IMR-90 (cell line): ENCODE measurements at regions of chr5 and their contacts with region 1.

Region 1: DNA sequence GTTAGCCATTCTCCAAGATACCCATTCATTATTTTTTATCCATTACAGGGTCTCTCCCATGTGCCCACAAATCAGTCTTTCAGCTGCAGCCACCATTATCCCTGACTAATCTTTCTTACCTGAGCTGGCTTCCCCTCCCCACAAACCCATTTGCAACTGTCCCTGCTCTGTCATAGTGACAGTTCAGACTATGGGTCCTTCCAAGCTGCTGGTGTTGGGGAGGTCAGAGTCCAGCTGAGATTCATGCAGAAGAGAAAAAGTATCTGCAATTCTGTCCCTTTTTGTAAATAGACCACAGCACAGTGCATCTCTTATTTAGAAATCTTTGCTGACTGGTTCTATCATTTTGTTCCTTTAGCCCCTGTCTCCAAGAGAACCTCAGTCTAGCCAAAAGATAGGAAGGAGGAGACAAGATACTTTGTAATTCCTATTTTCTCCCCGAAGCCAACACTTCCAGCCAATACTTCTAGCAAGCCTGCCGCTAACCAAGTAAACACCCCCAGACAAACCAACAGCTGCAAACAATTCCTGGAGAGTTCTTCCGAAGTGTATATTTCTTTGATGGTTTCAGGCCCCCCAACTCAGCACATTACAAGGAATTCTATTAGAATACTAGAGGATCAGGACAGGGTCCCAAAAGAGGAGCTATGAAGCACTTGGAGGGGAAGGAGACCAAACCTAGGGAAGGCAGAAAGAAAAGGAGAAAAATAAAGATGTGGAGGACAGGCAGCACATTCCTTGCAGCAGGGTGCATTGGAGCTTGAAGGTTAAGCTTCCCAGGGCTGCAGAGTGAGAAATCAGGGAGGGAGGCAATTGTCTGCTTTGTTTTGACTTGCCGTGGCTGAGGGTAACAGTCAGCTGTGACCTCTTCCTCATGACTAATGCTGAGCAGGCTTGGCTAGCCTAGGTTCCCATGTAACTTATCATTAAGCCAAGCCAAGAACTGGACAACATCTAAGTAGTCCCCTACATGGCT is 148.5 kb downstream of the SGCD start:
- DNase-seq: peak; percentile 98
- ATAC-seq: peak; percentile 91
- H3K4me3 ChIP-seq: no peak overlapping the region
- H3K27ac ChIP-seq: peak overlapping the region; percentile 89; the same call in 1 of the 2 replicates
- H3K4me1 ChIP-seq: peaks cover 14% of the 10 kb centered on the region
- H3K27me3 ChIP-seq: no peaks in the 10 kb centered on the region
- CTCF ChIP-seq: peak; percentile 44
- POLR2A ChIP-seq: no peak
- RAD21 ChIP-seq: peak; percentile 48

Region 2: GRCh38 chr5:154627698-154628678 is 1847.5 kb before region 1 on chr5:
- CTCF ChIA-PET with region 1: no interaction called
- POLR2A ChIA-PET with region 1: no interaction called
- dilution Hi-C with region 1: no loop called
- in situ Hi-C with region 1: no loop called
- intact Hi-C with region 1: no loop called
- DNase-seq: no peak
- ATAC-seq: no peak
- H3K4me3 ChIP-seq: no peak overlapping the region
- H3K27ac ChIP-seq: no peak overlapping the region
- H3K4me1 ChIP-seq: no peaks in the 10 kb centered on the region; the same call in 1 of the 2 replicates
- H3K27me3 ChIP-seq: peaks cover 16% of the 10 kb centered on the region
- CTCF ChIP-seq: no peak
- POLR2A ChIP-seq: no peak
- RAD21 ChIP-seq: no peak

Region 3: DNA sequence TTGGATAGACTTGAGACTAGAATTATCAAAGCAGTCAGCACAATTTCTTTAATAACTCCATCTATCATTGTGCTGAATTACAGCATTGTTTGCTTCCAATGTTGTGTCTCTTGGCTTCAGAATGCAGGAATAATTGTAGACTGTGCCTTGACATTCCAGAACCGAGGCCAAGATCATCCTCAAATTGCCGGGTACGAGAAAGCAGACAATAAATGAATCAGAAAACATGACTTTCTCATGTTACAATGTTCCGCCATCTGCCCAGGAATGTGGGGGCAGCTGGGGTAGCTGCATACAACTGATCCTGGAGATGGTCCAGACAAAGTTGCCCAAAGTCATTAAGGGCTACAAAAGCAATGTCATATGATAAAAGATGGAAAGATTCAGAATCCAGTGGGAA is 354.7 kb before region 1 on chr5:
- CTCF ChIA-PET with region 1: no interaction called
- POLR2A ChIA-PET with region 1: no interaction called
- dilution Hi-C with region 1: no loop called
- in situ Hi-C with region 1: no loop called
- intact Hi-C with region 1: loop called (anchors 1 kb)
- DNase-seq: no peak
- ATAC-seq: peak; percentile 50
- H3K4me3 ChIP-seq: no peak overlapping the region
- H3K27ac ChIP-seq: peak overlapping the region; percentile 72
- H3K4me1 ChIP-seq: peaks cover 6% of the 10 kb centered on the region
- H3K27me3 ChIP-seq: no peaks in the 10 kb centered on the region
- CTCF ChIP-seq: no peak
- POLR2A ChIP-seq: no peak
- RAD21 ChIP-seq: no peak

Region 4: GRCh38 chr5:156534906-156535485 is 59.5 kb after region 1 on chr5:
- CTCF ChIA-PET with region 1: no interaction called
- POLR2A ChIA-PET with region 1: no interaction called
- dilution Hi-C with region 1: no loop called
- in situ Hi-C with region 1: no loop called
- intact Hi-C with region 1: no loop called
- DNase-seq: peak; percentile 45
- ATAC-seq: no peak
- H3K4me3 ChIP-seq: no peak overlapping the region
- H3K27ac ChIP-seq: no peak overlapping the region
- H3K4me1 ChIP-seq: peaks cover 2% of the 10 kb centered on the region; the same call in 1 of the 2 replicates
- H3K27me3 ChIP-seq: no peaks in the 10 kb centered on the region
- CTCF ChIP-seq: no peak
- POLR2A ChIP-seq: no peak
- RAD21 ChIP-seq: no peak